Activated CD8-positive, alpha-beta T cell treated with anti-CD3 and anti-CD28 coated beads, Interleukin-2, amount 10 ng/mL, durations not matched to agents 7 days and 5 days (primary cell): ENCODE measurements at regions of chr14 and their contacts with region 1.

Region 1: DNA sequence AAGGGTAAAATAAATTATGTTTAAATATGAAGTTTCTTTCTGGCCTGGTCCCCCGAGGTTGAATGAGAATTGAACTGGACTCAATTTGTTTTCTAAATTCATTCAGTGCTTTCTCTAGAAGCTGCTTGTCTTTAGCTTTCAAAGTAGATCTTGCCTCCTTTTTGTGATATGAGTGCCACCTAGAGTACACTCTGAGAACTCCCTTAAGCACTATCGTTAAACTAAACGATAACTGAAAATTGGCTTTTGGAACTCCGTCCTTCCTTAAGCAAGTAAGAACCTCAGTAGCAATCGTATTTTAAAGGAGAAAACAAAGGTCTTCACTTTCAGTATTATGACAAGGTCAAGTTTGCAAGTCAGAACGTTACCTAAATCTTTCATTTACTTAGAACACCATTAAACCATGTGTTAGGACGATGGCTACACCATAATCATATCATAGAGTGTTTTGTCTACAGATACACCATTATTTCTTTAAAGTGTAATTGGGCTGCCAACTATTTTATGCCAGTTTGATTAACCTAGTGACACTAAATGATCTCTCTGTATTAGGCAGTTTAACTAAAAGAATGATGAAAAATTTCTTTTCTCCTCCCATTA is 364.8 kb downstream of the SNAPC1 start:
- DNase-seq: peak; percentile 23
- ATAC-seq: peak; percentile 65
- H3K4me3 Mint-ChIP-seq: no peak overlapping the region
- H3K27ac Mint-ChIP-seq: no peak overlapping the region
- H3K4me1 Mint-ChIP-seq: no peaks in the 10 kb centered on the region
- H3K27me3 Mint-ChIP-seq: peaks cover 46% of the 10 kb centered on the region

Region 2: DNA sequence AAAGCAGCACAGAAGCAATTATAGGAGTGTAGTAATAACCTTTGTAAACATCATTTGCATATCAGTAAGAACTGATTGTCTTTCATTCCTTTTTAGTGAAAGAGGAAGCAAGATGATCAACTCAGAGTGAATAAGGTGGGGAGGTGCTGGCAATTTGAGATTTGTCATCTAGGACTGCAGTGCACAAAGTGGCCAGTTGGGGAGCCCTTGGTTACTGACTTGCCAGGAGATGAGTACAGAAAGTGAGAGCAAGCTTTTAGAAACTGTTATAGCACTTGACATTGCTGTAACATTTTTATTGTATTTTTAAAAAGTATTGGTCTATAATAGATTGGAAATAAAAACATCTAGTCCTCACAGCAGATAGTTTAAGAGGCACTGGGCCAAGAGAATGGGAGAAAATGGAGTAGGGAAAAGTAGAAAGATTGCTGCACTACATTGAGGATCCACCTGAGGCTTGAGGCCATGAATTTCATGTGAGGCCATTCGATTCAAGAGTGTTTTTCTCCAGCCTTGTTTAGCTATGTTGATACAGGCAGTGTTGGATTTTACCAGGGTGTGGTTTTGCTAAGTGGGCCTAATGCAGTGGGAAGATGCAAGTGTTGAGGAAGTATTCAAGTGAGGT is 266.6 kb before region 1 on chr14:
- CTCF ChIA-PET with region 1: interaction called, 10 read pairs
- POLR2A ChIA-PET with region 1: no interaction called
- DNase-seq: peak; percentile 78
- ATAC-seq: peak; percentile 92
- H3K4me3 Mint-ChIP-seq: no peak overlapping the region
- H3K27ac Mint-ChIP-seq: no peak overlapping the region
- H3K4me1 Mint-ChIP-seq: no peaks in the 10 kb centered on the region
- H3K27me3 Mint-ChIP-seq: peaks cover 26% of the 10 kb centered on the region

Region 3: GRCh38 chr14:61894452-61895077 is 232.4 kb before region 1 on chr14:
- CTCF ChIA-PET with region 1: interaction called, 41 read pairs
- POLR2A ChIA-PET with region 1: no interaction called
- DNase-seq: peak; percentile 76
- ATAC-seq: peak; percentile 50
- H3K4me3 Mint-ChIP-seq: no peak overlapping the region
- H3K27ac Mint-ChIP-seq: no peak overlapping the region
- H3K4me1 Mint-ChIP-seq: peaks cover 10% of the 10 kb centered on the region
- H3K27me3 Mint-ChIP-seq: peaks cover 35% of the 10 kb centered on the region

Region 4: DNA sequence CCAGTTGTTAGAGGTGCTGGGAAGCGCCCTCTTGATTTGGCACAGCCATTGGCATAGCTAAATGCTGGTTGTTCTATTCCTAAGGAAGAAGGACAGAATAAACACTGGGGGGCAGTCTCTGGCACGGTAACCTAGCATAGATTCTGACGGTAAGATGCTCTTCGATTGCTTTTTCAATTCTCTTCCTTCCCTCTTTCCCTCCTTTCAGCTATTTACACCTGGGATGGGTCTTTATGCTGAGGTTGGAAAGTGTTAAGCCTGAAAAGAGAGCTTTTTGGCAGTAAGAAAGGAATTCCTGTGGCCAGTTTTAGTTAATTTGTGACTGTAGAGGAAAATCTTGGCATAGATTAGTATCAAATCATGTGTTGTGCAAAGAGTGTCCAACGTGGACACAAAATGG is 201.9 kb before region 1 on chr14:
- CTCF ChIA-PET with region 1: interaction called, 28 read pairs
- POLR2A ChIA-PET with region 1: no interaction called
- DNase-seq: peak; percentile 23
- ATAC-seq: no peak
- H3K4me3 Mint-ChIP-seq: no peak overlapping the region
- H3K27ac Mint-ChIP-seq: no peak overlapping the region
- H3K4me1 Mint-ChIP-seq: peaks cover 2% of the 10 kb centered on the region
- H3K27me3 Mint-ChIP-seq: peaks cover 36% of the 10 kb centered on the region

Region 5: DNA sequence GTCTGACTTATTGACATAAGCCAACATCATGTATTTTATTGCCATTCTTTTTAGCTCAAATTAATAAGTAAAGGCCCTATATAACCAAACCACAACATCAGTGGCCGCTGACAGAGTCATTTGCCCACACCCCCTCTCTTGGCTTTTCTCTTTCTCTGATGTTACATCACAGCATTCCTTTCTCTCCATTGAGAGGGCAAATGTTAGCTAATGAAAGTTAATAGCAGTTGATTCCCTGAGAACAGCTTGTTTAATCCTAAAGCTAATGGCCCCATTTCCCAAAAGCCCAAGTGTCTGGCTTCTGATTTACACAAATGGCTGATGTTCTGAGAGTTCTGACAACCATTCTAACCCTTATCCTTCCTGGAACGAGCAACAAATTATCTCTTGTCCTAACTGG is 55.9 kb before region 1 on chr14:
- CTCF ChIA-PET with region 1: no interaction called
- POLR2A ChIA-PET with region 1: no interaction called
- DNase-seq: no peak
- ATAC-seq: no peak
- H3K4me3 Mint-ChIP-seq: no peak overlapping the region
- H3K27ac Mint-ChIP-seq: no peak overlapping the region
- H3K4me1 Mint-ChIP-seq: no peaks in the 10 kb centered on the region
- H3K27me3 Mint-ChIP-seq: no peaks in the 10 kb centered on the region